HepG2 (cell line): ENCODE measurements at regions of chr16 and their contacts with region 1.

Region 1: DNA sequence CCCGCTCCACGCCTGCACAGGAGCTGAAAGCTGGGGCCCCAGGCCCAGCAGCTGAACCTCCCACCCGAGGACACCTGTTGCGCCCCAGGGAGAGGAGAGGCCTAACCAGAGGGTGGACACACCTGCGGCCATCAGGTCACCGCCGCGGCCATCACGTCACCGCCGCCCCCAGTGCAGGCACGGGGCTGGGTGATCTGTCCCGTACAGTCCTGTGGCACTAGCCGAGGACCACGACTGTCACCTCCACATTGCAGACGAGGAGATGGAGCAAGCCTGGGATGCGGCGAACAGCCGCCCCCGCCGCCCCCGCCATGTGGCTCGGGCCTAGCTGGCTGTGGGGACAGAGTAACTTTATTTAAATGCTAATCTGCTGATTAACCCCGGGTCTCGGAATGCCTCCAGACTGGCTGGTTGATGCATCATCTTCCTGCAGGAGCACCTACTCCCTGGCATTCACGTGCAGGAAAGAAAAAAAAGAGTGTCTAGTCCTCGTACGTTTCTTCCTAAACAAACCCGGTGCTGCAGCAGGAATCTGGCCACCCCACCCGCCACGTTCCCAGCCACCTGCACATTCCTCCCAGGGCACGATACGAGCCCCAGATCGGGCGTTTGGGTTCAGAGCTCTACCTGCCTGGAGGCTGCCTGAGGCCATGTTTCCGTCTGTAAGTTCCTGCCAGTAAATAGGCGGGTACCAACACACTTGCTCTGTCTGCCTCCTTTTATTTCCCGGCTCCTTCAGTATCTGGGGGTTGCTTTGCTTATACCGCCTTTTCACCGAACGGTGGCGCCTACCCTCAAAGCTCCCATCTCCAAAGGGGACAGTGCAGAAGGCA is 29.9 kb downstream of the PIEZO1 start:
- DNase-seq: no peak
- ATAC-seq: no peak
- H3K4me3 ChIP-seq: no peak overlapping the region
- H3K27ac ChIP-seq: no peak overlapping the region
- H3K4me1 ChIP-seq: peaks cover 17% of the 10 kb centered on the region
- H3K27me3 ChIP-seq: no peaks in the 10 kb centered on the region
- CTCF ChIP-seq: no peak
- EP300 ChIP-seq: no peak
- POLR2A ChIP-seq: no peak
- RAD21 ChIP-seq: no peak

Region 2: GRCh38 chr16:88706288-88706964 is 48.7 kb before region 1 on chr16 and contains the starts of genes CTU2 and RNF166:
- CTCF ChIA-PET with region 1: no interaction called
- POLR2A ChIA-PET with region 1: no interaction called
- in situ Hi-C with region 1: no loop called
- intact Hi-C with region 1: no loop called
- DNase-seq: peak; percentile 76
- ATAC-seq: peak; percentile 67
- H3K4me3 ChIP-seq: peak within 1 kb of the TSS; percentile 82 to 99 (median 83)
- H3K27ac ChIP-seq: peak within 1 kb of the TSS; percentile 54
- H3K4me1 ChIP-seq: peaks cover 80% of the 10 kb centered on the region
- H3K27me3 ChIP-seq: peaks cover 0 to 3% of the 10 kb centered on the region in 2 experiments; a peak in 1 of 5 replicates
- CTCF ChIP-seq: peak; percentile 19; the same call in 1 of the 2 replicates
- EP300 ChIP-seq: no peak; a peak in 1 of 4 replicates
- POLR2A ChIP-seq: no peak
- RAD21 ChIP-seq: peak; percentile 24; the same call in 1 of the 2 replicates
- total RNA-seq, gene CTU2: 21.9 TPM in 2 replicates
- total RNA-seq, gene RNF166: 15.1 and 23.0 TPM in 2 replicates

Region 3: DNA sequence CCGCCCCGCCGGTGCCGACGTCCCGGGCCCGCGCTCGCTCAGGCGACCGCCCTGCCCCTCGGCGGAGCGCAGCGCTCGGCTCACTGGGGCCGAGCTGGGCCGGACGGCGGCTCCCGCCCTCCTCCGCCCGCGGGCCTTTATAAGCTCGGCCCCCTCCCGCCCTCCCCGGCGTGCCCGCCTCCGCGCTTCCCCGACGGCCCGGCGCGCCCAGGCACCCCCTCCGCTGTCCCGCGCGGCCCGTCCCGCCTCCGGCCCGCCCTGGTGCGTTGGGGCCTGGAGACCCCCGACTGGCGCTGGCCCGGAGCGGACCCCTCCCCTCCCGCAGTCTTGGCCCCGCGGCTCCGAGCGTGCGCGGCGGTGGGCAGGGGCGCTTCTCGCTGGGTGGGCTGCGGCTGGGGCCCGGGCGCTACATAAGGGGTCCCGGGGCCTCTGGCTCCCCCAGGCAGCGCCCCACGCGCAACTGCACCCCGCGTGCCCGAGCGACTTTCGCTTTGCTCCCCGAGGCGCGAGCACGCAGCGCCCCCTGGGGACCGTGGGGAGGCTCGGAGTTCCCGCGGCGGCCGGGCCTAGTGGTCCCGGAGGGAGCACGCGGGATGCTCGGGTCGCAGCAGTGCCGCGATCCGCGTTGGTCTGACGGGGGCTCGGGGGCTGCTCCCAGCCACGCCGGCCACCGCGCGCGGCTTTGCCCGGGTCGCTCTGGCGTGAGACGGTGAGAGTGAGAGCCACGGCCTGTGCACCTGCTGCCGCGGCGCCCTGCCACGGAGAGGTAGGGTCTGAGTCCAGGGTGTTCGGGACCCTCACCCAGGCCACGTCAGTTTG is 30.2 kb after region 1 on chr16 and contains the start of gene PIEZO1:
- CTCF ChIA-PET with region 1: interaction called, 5 read pairs
- POLR2A ChIA-PET with region 1: interaction called, 36 read pairs
- in situ Hi-C with region 1: no loop called
- intact Hi-C with region 1: loop called (anchors 1 kb)
- DNase-seq: no peak
- ATAC-seq: peak; percentile 37
- H3K4me3 ChIP-seq: peak within 1 kb of the TSS; percentile 73 to 87 (median 85)
- H3K27ac ChIP-seq: peak within 1 kb of the TSS; percentile 70
- H3K4me1 ChIP-seq: peaks cover 76% of the 10 kb centered on the region
- H3K27me3 ChIP-seq: no peaks in the 10 kb centered on the region; a peak in 1 of 5 replicates
- CTCF ChIP-seq: peak; percentile 96
- EP300 ChIP-seq: no peak
- POLR2A ChIP-seq: peak; percentile 76 to 82
- RAD21 ChIP-seq: peak; percentile 93
- total RNA-seq, gene PIEZO1: 32.5 and 85.0 TPM in 2 replicates

Region 4: GRCh38 chr16:88791755-88792550 is 36.8 kb after region 1 on chr16:
- CTCF ChIA-PET with region 1: no interaction called
- POLR2A ChIA-PET with region 1: interaction called, 11 read pairs
- in situ Hi-C with region 1: no loop called
- intact Hi-C with region 1: loop called (anchors 1 kb)
- DNase-seq: no peak
- ATAC-seq: peak; percentile 27
- H3K4me3 ChIP-seq: peak overlapping the region in 1 of 3 experiments; percentile 52; a peak in 1 of 6 replicates
- H3K27ac ChIP-seq: no peak overlapping the region
- H3K4me1 ChIP-seq: peaks cover 86% of the 10 kb centered on the region
- H3K27me3 ChIP-seq: peaks cover 1 to 5% of the 10 kb centered on the region in 2 experiments; a peak in 3 of 5 replicates
- CTCF ChIP-seq: no peak
- EP300 ChIP-seq: no peak
- POLR2A ChIP-seq: no peak
- RAD21 ChIP-seq: no peak

Region 5: GRCh38 chr16:88803264-88803987 is 48.3 kb after region 1 on chr16 and contains the start of gene CDT1:
- CTCF ChIA-PET with region 1: no interaction called
- POLR2A ChIA-PET with region 1: interaction called, 6 read pairs
- in situ Hi-C with region 1: loop called (anchors 5 kb)
- intact Hi-C with region 1: no loop called
- DNase-seq: peak; percentile 65
- ATAC-seq: peak; percentile 9; the same call in 1 of the 3 replicates
- H3K4me3 ChIP-seq: peak within 1 kb of the TSS; percentile 73 to 88 (median 76)
- H3K27ac ChIP-seq: peak within 1 kb of the TSS; percentile 71
- H3K4me1 ChIP-seq: peaks cover 24% of the 10 kb centered on the region
- H3K27me3 ChIP-seq: no peaks in the 10 kb centered on the region
- CTCF ChIP-seq: 0 out of 2 replicates have a peak, but pooled peaks have one; percentile 9
- EP300 ChIP-seq: peak in 1 of 2 experiments; percentile 41; a peak in 1 of 4 replicates
- POLR2A ChIP-seq: peak in 1 of 2 experiments; percentile 51; a peak in 2 of 4 replicates
- RAD21 ChIP-seq: 0 out of 2 replicates have a peak, but pooled peaks have one; percentile 53
- total RNA-seq, gene CDT1: 16.5 and 23.1 TPM in 2 replicates

Region 6: DNA sequence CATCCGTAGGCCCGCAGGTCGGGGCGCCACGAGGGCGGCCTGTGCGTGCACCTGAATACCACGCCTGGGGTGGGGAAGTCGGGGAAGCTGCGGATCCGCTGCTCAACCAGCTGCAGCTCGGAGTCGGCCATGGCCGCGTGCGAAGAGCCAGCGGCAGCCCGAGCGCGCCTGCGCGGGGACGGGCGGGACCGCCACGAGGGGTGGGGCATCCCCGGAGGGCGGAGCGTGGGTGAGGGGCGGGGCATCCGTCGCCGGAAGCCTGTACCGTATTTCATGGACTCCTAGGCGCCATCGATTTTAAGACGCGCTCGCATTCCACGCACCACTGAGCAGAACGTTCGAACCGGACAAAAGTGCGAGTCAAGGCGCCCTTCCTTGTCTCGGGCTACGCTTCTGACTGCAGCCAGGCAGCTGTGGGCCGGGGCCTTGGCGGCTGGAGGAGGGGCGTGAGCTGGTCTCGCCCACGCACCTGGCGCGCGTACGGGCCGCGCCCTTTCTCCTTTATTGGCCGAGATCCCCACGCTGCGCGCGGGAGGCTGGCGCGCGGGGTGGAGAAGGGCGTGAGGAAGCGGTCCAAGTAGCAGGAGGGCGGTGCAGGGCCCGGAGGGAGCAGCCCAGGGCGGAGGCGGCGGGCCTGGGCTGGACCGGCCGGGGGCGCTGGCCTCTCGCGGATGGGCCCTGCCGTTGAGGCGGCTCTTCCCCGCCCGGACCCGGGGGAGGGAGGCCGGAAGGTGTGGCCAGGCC is 56.8 kb after region 1 on chr16 and contains the start of gene APRT:
- CTCF ChIA-PET with region 1: no interaction called
- POLR2A ChIA-PET with region 1: interaction called, 36 read pairs
- in situ Hi-C with region 1: no loop called
- intact Hi-C with region 1: loop called (anchors 5 kb)
- DNase-seq: peak; percentile 83
- ATAC-seq: peak; percentile 65
- H3K4me3 ChIP-seq: peak within 1 kb of the TSS; percentile 72 to 90 (median 74)
- H3K27ac ChIP-seq: peak within 1 kb of the TSS; percentile 76
- H3K4me1 ChIP-seq: peaks cover 33% of the 10 kb centered on the region
- H3K27me3 ChIP-seq: no peaks in the 10 kb centered on the region; a peak in 1 of 5 replicates
- CTCF ChIP-seq: peak; percentile 55
- EP300 ChIP-seq: no peak
- POLR2A ChIP-seq: peak in 1 of 2 experiments; percentile 94; a peak in 2 of 4 replicates
- RAD21 ChIP-seq: peak; percentile 76
- total RNA-seq, gene APRT: 242 and 274 TPM in 2 replicates

Region 7: DNA sequence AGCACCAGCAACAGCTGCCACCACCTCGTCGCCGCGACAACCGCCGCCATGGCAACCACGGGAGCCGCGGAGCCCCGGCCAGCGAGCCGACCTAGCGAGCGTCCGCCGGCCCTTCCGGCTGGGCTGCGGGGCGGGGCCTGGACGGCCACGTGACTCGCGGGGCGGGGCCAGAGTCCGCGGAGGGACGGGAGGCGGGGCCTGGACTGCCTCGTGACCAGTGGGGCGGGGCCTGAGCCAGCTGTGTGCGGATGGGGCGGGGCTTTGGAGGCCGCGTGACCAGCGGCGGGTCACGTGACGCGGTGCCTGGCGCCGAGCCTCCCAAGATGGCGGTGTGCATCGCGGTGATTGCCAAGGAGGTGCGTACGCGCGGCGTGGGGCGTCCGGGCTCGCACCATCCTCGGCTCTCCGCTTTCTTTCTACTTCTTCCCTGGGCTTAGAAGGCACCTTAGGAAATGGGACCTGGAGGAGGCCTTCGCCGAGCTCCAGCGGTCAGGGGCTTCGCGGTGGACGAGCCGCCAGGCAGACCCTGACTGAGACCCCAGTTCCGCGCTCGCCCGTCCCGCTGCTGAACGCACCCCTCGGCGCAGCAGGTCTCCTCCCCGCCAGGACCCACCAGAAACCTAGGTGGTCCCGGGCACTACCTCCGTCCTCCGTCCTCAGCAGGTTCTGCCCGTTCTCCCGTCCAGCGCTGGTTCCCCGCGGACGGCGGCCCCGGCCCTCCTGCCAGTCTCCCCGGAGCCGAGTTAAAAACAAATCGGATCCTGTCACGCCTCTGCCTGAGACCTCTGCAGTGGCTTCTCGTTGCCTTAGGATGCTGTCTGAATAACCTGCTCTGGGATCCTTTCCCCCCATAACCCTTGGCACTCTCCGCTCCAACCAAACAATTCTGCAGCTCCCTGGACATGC is 102.0 kb after region 1 on chr16 and contains the starts of genes GALNS and TRAPPC2L:
- CTCF ChIA-PET with region 1: interaction called, 12 read pairs
- POLR2A ChIA-PET with region 1: interaction called, 11 read pairs
- in situ Hi-C with region 1: loop called (anchors 5 kb)
- intact Hi-C with region 1: loop called (anchors 5 kb)
- DNase-seq: peak; percentile 89
- ATAC-seq: peak; percentile 81
- H3K4me3 ChIP-seq: peak within 1 kb of the TSS; percentile 68 to 100 (median 98)
- H3K27ac ChIP-seq: peak within 1 kb of the TSS; percentile 62
- H3K4me1 ChIP-seq: peaks cover 15% of the 10 kb centered on the region
- H3K27me3 ChIP-seq: no peaks in the 10 kb centered on the region; a peak in 1 of 5 replicates
- CTCF ChIP-seq: no peak
- EP300 ChIP-seq: no peak
- POLR2A ChIP-seq: peak; percentile 94 to 97
- RAD21 ChIP-seq: peak; percentile 31; the same call in 1 of the 2 replicates
- total RNA-seq, gene GALNS: 2.8 and 9.2 TPM in 2 replicates
- total RNA-seq, gene TRAPPC2L: 107 and 158 TPM in 2 replicates